Panc1 (cell line): ENCODE measurements at regions of chr1 and their contacts with region 1.

Region 1: DNA sequence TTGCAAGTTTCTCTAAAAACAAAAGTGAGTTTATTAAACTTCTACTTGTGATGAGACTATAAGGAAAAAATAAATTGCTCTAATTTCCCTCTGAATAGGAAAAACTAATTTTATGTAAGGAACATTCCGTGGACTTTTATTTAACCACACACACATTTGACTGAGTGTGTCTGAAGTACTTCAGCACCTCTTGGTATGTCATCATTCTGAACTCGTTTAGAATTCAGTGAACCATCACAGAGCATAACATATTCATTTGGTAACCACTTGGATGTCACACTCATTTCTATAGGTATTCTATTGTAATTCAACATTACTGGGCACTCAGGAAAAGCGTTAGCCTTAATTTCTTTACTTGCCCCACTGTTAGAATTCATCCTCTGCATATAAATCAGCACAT is 79.1 kb downstream of the RGS21 start:
- DNase-seq: no peak
- ATAC-seq: no peak
- H3K4me3 ChIP-seq: no peak overlapping the region
- H3K27ac ChIP-seq: no peak overlapping the region
- H3K4me1 ChIP-seq: no peaks in the 10 kb centered on the region
- H3K27me3 ChIP-seq: no peaks in the 10 kb centered on the region
- CTCF ChIP-seq: no peak

Region 2: GRCh38 chr1:194052514-194053333 is 1656.8 kb after region 1 on chr1:
- CTCF ChIA-PET with region 1: no interaction called
- POLR2A ChIA-PET with region 1: interaction called, 10 read pairs
- in situ Hi-C with region 1: no loop called
- intact Hi-C with region 1: no loop called
- DNase-seq: no peak
- ATAC-seq: no peak
- H3K4me3 ChIP-seq: no peak overlapping the region
- H3K27ac ChIP-seq: no peak overlapping the region
- H3K4me1 ChIP-seq: no peaks in the 10 kb centered on the region
- H3K27me3 ChIP-seq: no peaks in the 10 kb centered on the region
- CTCF ChIP-seq: no peak